ENCODE measurements at regions of chr7 and their contacts with region 1.

Region 1: DNA sequence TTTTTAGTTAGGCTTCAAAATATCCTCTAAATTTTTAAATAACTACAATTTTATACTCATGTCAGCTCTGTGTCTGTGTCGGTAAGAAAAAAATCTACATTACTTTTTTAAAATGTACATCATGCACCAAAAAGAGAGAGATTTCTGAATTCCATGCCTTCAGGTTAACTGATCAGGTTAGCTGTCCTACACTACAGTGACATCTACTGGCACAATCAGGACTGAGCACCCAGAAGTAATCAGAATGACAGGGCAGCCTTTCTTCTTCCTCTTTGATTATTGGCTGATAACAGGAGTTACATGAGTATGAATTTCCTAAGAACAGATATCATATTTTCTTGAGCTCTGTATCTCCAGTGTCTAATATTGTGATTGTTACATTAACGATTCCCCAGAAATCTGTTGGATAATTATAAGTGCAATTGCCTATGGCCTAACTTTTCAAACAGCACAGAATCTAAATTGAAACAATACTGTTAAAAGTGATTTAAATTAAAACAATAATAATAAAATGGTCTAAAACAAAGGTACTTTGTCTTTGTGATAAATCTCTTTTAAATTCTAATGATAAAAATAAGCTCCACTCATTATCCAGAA is 41.8 kb upstream of the HYCC1 start:
- DNase-seq: peak; percentile 77
- ATAC-seq: peak; percentile 94
- H3K4me3 ChIP-seq: no peak overlapping the region
- H3K27ac ChIP-seq: no peak overlapping the region
- H3K4me1 ChIP-seq: no peaks in the 10 kb centered on the region
- H3K27me3 ChIP-seq: no peaks in the 10 kb centered on the region
- CTCF ChIP-seq: peak; percentile 94
- POLR2A ChIP-seq: peak; percentile 45; the same call in 1 of the 2 replicates
- RAD21 ChIP-seq: peak; percentile 98

Region 2: GRCh38 chr7:22103255-22103969 is 952.3 kb before region 1 on chr7:
- CTCF ChIA-PET with region 1: no interaction called
- POLR2A ChIA-PET with region 1: no interaction called
- dilution Hi-C with region 1: no loop called
- in situ Hi-C with region 1: loop called (anchors 25 kb)
- intact Hi-C with region 1: no loop called
- DNase-seq: peak; percentile 77
- ATAC-seq: peak; percentile 94
- H3K4me3 ChIP-seq: no peak overlapping the region
- H3K27ac ChIP-seq: no peak overlapping the region
- H3K4me1 ChIP-seq: no peaks in the 10 kb centered on the region
- H3K27me3 ChIP-seq: peaks cover 15% of the 10 kb centered on the region
- CTCF ChIP-seq: peak; percentile 80
- POLR2A ChIP-seq: no peak
- RAD21 ChIP-seq: peak; percentile 68

Region 3: DNA sequence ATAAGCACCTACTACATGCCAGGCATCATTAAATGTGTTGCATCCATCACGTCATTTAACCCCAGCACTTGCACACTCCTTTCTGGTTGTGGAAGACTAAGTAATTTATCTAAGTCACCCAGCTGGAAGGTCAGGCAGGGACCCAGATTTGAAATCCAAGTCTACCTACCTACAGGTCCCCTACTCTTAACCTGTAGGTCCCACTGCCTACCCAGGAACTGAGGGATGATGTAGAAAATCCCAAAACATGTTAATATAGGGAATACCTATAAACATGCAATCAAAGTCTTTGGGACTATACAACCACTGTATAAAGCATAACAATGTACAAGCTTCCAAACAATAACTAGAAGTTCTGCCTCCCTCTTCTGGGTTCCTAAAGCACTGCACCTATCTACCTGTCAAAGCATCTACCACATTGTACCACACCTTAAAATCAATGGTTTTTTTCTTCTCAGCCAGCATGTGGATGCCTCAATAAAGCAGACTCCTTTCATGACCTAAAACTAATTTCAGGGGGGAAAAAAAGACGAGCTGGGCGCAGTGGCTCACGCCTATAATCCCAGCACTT is 323.0 kb before region 1 on chr7:
- CTCF ChIA-PET with region 1: interaction called, 6 read pairs
- POLR2A ChIA-PET with region 1: no interaction called
- dilution Hi-C with region 1: no loop called
- in situ Hi-C with region 1: loop called (anchors 10 kb)
- intact Hi-C with region 1: loop called (anchors 2 kb)
- DNase-seq: peak; percentile 45
- ATAC-seq: no peak
- H3K4me3 ChIP-seq: no peak overlapping the region
- H3K27ac ChIP-seq: no peak overlapping the region
- H3K4me1 ChIP-seq: peaks cover 5% of the 10 kb centered on the region
- H3K27me3 ChIP-seq: no peaks in the 10 kb centered on the region
- CTCF ChIP-seq: peak; percentile 32
- POLR2A ChIP-seq: peak; percentile 94
- RAD21 ChIP-seq: peak; percentile 45

Region 4: DNA sequence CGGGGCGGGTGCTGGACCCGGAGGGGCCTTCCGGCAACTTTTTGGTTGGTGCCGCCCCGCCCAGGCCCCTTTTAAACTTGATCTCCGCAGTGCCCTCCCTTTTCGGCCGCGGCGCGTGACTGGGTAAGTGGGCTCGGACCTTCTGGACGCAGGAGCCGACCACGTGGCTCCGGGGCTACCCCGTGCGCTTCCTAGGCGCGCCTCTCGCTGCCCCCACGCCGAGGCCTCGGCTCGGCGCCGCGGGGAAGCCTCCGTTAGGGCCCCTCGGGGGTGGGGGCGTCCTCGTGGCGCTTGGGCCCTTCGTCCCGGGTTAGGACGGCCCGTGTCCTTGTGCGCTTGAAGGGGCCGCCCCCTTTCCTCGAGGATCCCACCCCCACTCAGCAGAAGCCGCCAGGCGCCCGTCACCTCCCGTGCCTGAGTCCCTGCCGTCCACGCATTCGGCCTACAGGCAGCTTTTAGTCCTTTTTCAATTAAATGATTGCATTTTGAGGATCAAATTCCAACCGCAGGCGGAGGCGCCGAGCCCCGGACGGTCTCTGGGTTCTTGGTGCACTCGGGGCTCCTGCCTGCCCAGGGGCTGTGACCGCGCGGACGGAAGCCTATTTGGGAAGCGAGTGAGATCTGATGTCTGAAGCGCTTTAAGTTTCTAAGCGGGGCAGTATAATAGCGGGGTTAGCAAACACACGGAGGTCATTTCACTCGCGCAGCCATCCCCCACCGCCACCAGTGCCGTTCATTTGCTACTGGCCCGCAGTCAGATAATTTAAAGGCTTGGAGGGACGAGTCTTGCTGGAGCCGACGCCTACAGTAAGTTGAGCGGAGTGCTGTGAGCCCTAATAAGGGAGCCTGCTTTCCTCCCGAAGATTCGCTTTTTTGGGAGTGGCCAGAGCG is 201.3 kb before region 1 on chr7:
- CTCF ChIA-PET with region 1: interaction called, 7 read pairs
- POLR2A ChIA-PET with region 1: interaction called, 3 read pairs
- dilution Hi-C with region 1: no loop called
- in situ Hi-C with region 1: no loop called
- intact Hi-C with region 1: loop called (anchors 1 kb)
- DNase-seq: peak; percentile 89
- ATAC-seq: peak; percentile 78
- H3K4me3 ChIP-seq: peak overlapping the region; percentile 68
- H3K27ac ChIP-seq: peak overlapping the region; percentile 80
- H3K4me1 ChIP-seq: peaks cover 11% of the 10 kb centered on the region
- H3K27me3 ChIP-seq: no peaks in the 10 kb centered on the region
- CTCF ChIP-seq: no peak
- POLR2A ChIP-seq: peak; percentile 91
- RAD21 ChIP-seq: no peak; the same call in 1 of the 2 replicates

Region 5: GRCh38 chr7:23043441-23043840 is 12.2 kb before region 1 on chr7:
- CTCF ChIA-PET with region 1: interaction called, 12 read pairs
- POLR2A ChIA-PET with region 1: no interaction called
- dilution Hi-C with region 1: no loop called
- in situ Hi-C with region 1: no loop called
- intact Hi-C with region 1: no loop called
- DNase-seq: no peak
- ATAC-seq: no peak
- H3K4me3 ChIP-seq: no peak overlapping the region
- H3K27ac ChIP-seq: no peak overlapping the region
- H3K4me1 ChIP-seq: peaks cover 4% of the 10 kb centered on the region
- H3K27me3 ChIP-seq: no peaks in the 10 kb centered on the region
- CTCF ChIP-seq: no peak
- POLR2A ChIP-seq: no peak
- RAD21 ChIP-seq: no peak

Measured in IMR-90 (cell line).